HCT116 (cell line): ENCODE measurements at regions of chr7 and their contacts with region 1.

Region 1: GRCh38 chr7:125480762-125481161 is 551.1 kb upstream of the POT1 start:
- DNase-seq: no peak
- ATAC-seq: no peak
- H3K4me3 ChIP-seq: no peak overlapping the region
- H3K27ac ChIP-seq: no peak overlapping the region
- H3K4me1 ChIP-seq: no peaks in the 10 kb centered on the region
- H3K27me3 ChIP-seq: no peaks in the 10 kb centered on the region
- CTCF ChIP-seq: no peak
- POLR2A ChIP-seq: no peak
- RAD21 ChIP-seq: no peak

Region 2: GRCh38 chr7:125412890-125413665 is 67.7 kb before region 1 on chr7:
- CTCF ChIA-PET with region 1: no interaction called
- POLR2A ChIA-PET with region 1: no interaction called
- RAD21 ChIA-PET with region 1: no interaction called
- intact Hi-C with region 1: no loop called
- DNase-seq: no peak
- ATAC-seq: no peak
- H3K4me3 ChIP-seq: no peak overlapping the region
- H3K27ac ChIP-seq: no peak overlapping the region
- H3K4me1 ChIP-seq: no peaks in the 10 kb centered on the region
- H3K27me3 ChIP-seq: no peaks in the 10 kb centered on the region
- CTCF ChIP-seq: no peak
- POLR2A ChIP-seq: no peak
- RAD21 ChIP-seq: no peak

Region 3: GRCh38 chr7:125516194-125516593 is 35.4 kb after region 1 on chr7:
- CTCF ChIA-PET with region 1: no interaction called
- POLR2A ChIA-PET with region 1: no interaction called
- RAD21 ChIA-PET with region 1: no interaction called
- intact Hi-C with region 1: loop called (anchors 1 kb)
- DNase-seq: no peak
- ATAC-seq: no peak
- H3K4me3 ChIP-seq: no peak overlapping the region
- H3K27ac ChIP-seq: no peak overlapping the region
- H3K4me1 ChIP-seq: no peaks in the 10 kb centered on the region
- H3K27me3 ChIP-seq: no peaks in the 10 kb centered on the region
- CTCF ChIP-seq: no peak
- POLR2A ChIP-seq: no peak
- RAD21 ChIP-seq: no peak

Region 4: DNA sequence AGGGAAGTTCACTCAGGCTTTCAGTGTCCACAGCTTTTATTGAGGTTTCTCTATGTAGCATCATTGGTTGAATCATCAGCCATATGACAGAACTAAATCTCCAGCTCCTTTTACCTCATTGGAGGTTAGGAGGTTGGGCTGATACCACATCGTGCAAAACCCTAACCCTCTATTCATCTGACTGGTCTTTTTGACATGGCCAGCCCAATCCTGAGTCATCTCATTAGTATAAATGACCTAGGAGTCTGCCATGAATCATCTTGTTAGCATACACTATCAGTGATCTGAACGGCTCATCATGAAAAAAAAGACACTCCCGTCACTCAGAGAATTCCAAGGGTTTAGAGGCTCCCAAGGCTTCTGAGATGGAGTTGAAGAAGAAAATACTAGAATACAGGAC is 118.6 kb after region 1 on chr7:
- CTCF ChIA-PET with region 1: no interaction called
- POLR2A ChIA-PET with region 1: no interaction called
- RAD21 ChIA-PET with region 1: no interaction called
- intact Hi-C with region 1: no loop called
- DNase-seq: no peak
- ATAC-seq: no peak
- H3K4me3 ChIP-seq: no peak overlapping the region
- H3K27ac ChIP-seq: no peak overlapping the region
- H3K4me1 ChIP-seq: no peaks in the 10 kb centered on the region
- H3K27me3 ChIP-seq: no peaks in the 10 kb centered on the region
- CTCF ChIP-seq: no peak
- POLR2A ChIP-seq: no peak
- RAD21 ChIP-seq: no peak

Region 5: GRCh38 chr7:125966278-125967048 is 485.7 kb after region 1 on chr7:
- CTCF ChIA-PET with region 1: no interaction called
- POLR2A ChIA-PET with region 1: no interaction called
- RAD21 ChIA-PET with region 1: no interaction called
- intact Hi-C with region 1: no loop called
- DNase-seq: no peak
- ATAC-seq: no peak
- H3K4me3 ChIP-seq: no peak overlapping the region
- H3K27ac ChIP-seq: no peak overlapping the region
- H3K4me1 ChIP-seq: no peaks in the 10 kb centered on the region
- H3K27me3 ChIP-seq: no peaks in the 10 kb centered on the region
- CTCF ChIP-seq: no peak
- POLR2A ChIP-seq: no peak
- RAD21 ChIP-seq: no peak